Psoas muscle (tissue), 8 donors: ENCODE measurements at regions of chr2 and their contacts with region 1.

Region 1: DNA sequence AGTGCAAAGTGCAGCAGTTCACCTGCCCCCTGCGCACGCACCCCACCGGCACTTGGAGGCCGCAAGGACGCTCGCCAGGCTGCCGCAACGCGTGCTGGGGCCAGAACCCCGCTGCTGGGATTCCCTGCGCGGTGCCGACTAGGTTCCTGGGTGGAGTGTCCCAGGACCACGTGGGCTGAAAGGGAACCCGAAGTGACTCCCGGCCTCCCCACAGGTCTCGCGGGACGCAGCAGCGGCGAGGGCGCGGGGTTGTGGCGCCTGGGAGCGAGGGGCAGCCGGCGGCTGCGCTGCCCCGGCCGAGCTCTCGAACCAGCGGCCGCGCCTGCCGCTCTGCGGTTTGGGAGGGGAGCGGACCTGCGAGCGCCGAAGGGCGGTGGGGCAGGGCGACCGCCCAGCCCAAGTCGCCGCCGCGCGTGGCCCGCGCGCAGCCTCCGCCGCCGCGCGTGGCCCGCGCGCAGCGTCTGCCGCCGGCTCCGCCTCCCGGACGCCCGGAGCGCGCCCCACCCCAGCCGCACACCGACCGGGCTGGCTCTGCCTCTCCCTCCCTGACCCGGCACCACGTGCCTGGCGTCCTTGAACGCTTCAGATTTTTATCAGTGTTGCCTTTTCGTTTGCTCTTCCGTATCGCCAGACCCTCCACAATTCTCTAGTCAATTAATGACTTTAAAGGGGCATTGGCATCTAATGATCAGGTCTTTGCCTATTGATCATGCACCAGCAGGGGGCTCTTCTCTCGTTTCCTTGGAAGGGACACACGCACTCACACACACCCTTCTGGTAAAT is at the start of gene FTCDNL1:
- DNase-seq: peak; percentile 79 to 89
- ATAC-seq: peak; percentile 92 to 95 (median 94)
- H3K4me3 ChIP-seq: peak within 1 kb of the TSS; percentile 80
- H3K27ac ChIP-seq: peak within 1 kb of the TSS; percentile 88
- H3K4me1 ChIP-seq: no peaks in the 10 kb centered on the region
- H3K27me3 ChIP-seq: no peaks in the 10 kb centered on the region
- CTCF ChIP-seq: peak; percentile 54
- total RNA-seq, gene FTCDNL1: 9.0 to 25.7 (median 22.3) TPM

Region 2: DNA sequence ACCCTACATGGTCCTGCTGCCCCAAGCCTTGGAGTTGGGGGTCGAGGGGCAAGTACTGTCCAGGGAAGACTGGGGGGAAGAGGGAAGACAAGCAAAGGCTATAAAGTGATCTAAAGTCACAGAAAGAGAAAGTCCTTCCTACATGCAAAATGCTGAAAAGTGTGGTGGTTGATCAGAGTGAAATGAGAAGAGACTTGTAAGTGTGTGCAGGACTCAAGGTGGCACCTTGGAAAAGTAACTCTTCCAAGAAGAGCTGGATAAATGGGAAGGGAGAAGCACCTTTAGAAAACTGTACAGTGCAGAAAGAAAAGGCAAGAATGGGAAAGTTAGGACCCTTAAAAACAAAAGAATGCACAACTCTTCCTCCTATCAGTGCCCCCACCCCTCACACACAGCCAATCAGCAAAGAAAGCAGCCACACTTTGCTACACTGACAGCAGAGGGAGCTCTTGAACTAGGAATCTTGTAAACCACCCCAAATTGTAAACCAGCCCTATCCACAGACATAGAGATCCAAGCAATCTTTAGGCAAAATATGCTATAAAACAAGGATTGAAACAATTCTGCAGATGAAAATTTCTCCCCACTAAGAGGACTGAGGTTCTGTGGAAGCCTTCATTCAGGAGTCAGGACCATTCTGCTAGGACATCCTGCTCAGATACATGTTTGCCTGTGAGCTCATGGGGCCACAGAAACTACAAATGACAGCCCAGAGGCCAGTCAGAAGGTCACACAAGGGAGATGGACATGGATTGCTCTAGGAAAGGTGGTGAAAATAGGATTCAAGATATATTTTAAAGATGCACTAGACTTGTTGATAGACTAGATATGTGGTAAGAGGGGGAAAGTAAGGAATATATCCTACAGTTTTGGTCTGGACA is 146.3 kb before region 1 on chr2:
- intact Hi-C with region 1: loop called in 1 of 2 experiments (anchors 5 kb)
- DNase-seq: no peak
- ATAC-seq: peak; percentile 55 to 91 (median 73)
- H3K4me3 ChIP-seq: no peak overlapping the region
- H3K27ac ChIP-seq: no peak overlapping the region
- H3K4me1 ChIP-seq: no peaks in the 10 kb centered on the region
- H3K27me3 ChIP-seq: no peaks in the 10 kb centered on the region
- CTCF ChIP-seq: peak; percentile 60

Region 3: GRCh38 chr2:199911052-199911876 is 60.4 kb after region 1 on chr2 and contains the start of gene C2orf69:
- intact Hi-C with region 1: loop called in 1 of 2 experiments (anchors 5 kb)
- DNase-seq: peak; percentile 94 to 97
- ATAC-seq: peak; percentile 99
- H3K4me3 ChIP-seq: peak within 1 kb of the TSS; percentile 87
- H3K27ac ChIP-seq: peak within 1 kb of the TSS; percentile 98
- H3K4me1 ChIP-seq: peaks cover 27% of the 10 kb centered on the region
- H3K27me3 ChIP-seq: no peaks in the 10 kb centered on the region
- CTCF ChIP-seq: peak; percentile 3
- total RNA-seq, gene C2orf69: 13.0 to 21.6 (median 15.8) TPM

Region 4: GRCh38 chr2:199940373-199940772 is 89.5 kb after region 1 on chr2:
- intact Hi-C with region 1: loop called (anchors 5 to 10 kb)
- DNase-seq: no peak
- ATAC-seq: peak; percentile 61 to 78 (median 72)
- H3K4me3 ChIP-seq: no peak overlapping the region
- H3K27ac ChIP-seq: no peak overlapping the region
- H3K4me1 ChIP-seq: peaks cover 8% of the 10 kb centered on the region
- H3K27me3 ChIP-seq: no peaks in the 10 kb centered on the region
- CTCF ChIP-seq: peak; percentile 43